ENCODE measurements at regions of chr18 and their contacts with region 1.

Region 1: DNA sequence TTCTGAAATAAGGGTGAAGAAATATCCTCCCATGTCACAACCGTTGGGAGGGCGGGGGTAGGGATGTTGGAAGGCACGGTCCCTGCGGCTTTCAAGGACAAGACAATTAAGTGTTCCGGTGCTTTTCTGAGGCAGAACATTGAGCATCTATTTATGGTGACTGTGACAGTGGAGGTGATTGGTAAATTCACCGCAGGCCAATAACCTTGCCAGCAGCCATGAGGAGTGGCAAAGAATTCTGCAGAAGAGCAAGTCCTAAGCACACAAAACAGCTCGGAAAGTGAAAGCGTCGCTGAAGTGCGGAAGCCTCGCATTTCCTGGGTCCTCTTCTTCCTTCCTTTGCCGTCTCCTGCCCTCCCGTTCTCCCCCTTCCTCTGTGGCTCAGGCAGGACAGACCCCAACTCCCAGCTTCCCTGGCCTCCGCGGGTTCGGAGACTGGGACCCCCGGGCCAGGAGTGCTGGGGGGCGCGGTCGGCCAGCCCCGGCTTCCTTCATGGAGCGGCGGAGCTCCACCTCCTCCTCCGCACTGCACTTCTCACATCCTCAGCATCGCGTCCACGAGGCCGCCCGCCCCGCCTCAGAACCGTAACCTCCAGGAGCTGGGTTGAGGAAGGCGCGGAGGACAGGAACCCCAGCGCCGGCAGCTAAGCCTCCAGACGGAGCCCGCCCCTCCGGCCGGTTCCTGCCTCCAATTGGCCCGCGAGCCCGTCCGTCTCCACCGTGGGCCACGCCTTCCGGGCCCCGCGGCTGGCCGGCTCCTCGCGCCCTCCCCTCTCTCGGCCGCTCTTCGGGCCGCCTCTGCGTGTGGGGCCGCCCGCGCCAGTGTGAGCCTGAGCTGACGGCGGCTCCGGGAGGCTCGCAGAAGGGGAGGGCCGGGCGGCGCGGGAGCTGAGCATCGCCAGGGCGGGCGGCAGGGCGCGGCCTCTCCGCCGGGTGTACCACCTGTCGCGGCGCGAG is at the start of gene ME2:
- DNase-seq: peak; percentile 86 to 94 (median 87)
- H3K4me3 ChIP-seq: peak within 1 kb of the TSS; percentile 76 to 94
- H3K4me3 Mint-ChIP-seq: peak within 1 kb of the TSS; percentile 97 to 99 (median 99)
- H3K27ac ChIP-seq: peak within 1 kb of the TSS; percentile 88
- H3K27ac Mint-ChIP-seq: peak within 1 kb of the TSS; percentile 96 to 99 (median 99)
- H3K4me1 ChIP-seq: peaks cover 44% of the 10 kb centered on the region
- H3K4me1 Mint-ChIP-seq: peaks cover 19 to 32% (median 26%) of the 10 kb centered on the region in 4 donors
- H3K27me3 ChIP-seq: no peaks in the 10 kb centered on the region
- H3K27me3 Mint-ChIP-seq: no peaks in the 10 kb centered on the region
- total RNA-seq, gene ME2: 48.6 to 53.5 TPM

Region 2: GRCh38 chr18:50281295-50281971 is 597.2 kb before region 1 on chr18 and contains the start of gene MBD1:
- CTCF ChIA-PET with region 1: no interaction called
- POLR2A ChIA-PET with region 1: no interaction called
- intact Hi-C with region 1: loop called (anchors 2 kb)
- DNase-seq: peak; percentile 97 to 99 (median 98)
- H3K4me3 ChIP-seq: peak within 1 kb of the TSS; percentile 45 to 97
- H3K4me3 Mint-ChIP-seq: peak within 1 kb of the TSS; percentile 96 to 99 (median 98)
- H3K27ac ChIP-seq: peak within 1 kb of the TSS; percentile 95
- H3K27ac Mint-ChIP-seq: peak within 1 kb of the TSS; percentile 88 to 99 (median 98)
- H3K4me1 ChIP-seq: peaks cover 36% of the 10 kb centered on the region
- H3K4me1 Mint-ChIP-seq: peaks cover 31 to 59% (median 47%) of the 10 kb centered on the region in 4 donors
- H3K27me3 ChIP-seq: no peaks in the 10 kb centered on the region
- H3K27me3 Mint-ChIP-seq: no peaks in the 10 kb centered on the region
- total RNA-seq, gene MBD1: 135 to 144 TPM

Region 3: DNA sequence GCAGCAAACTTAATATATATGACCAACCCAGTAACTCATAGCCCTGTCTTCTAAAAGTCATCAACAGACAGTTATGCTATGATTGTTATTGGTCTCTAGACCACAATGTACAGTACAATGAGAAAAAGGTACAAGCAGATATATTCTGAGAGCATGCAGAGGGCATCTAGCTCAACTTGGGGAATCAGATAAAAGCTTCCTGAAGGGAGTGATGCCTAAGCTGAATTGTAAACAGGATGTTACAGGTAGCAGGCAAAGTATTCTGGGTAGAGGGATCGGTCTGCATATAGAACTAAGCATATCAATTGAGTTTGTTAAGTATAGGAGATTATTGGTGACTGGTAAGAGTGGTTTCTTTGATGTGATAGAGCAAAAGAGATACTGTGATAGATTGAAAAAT is 30.6 kb after region 1 on chr18:
- CTCF ChIA-PET with region 1: interaction called, 3 read pairs
- POLR2A ChIA-PET with region 1: interaction called, 11 read pairs
- intact Hi-C with region 1: loop called (anchors 5 kb)
- DNase-seq: peak in 3 of 5 donors; percentile 1 to 25 (median 13)
- H3K4me3 ChIP-seq: no peak overlapping the region
- H3K4me3 Mint-ChIP-seq: peak overlapping the region in 3 of 8 donors; percentile 15 to 75 (median 43)
- H3K27ac ChIP-seq: no peak overlapping the region
- H3K27ac Mint-ChIP-seq: peak overlapping the region in 6 of 7 donors; percentile 52 to 98 (median 72)
- H3K4me1 ChIP-seq: peaks cover 8% of the 10 kb centered on the region
- H3K4me1 Mint-ChIP-seq: peaks cover 15 to 30% (median 23%) of the 10 kb centered on the region in 4 donors
- H3K27me3 ChIP-seq: no peaks in the 10 kb centered on the region
- H3K27me3 Mint-ChIP-seq: no peaks in the 10 kb centered on the region

Region 4: GRCh38 chr18:50967714-50968661 is 89.4 kb after region 1 on chr18 and contains the start of gene ELAC1:
- CTCF ChIA-PET with region 1: no interaction called
- POLR2A ChIA-PET with region 1: interaction called, 74 read pairs
- intact Hi-C with region 1: loop called (anchors 1 kb)
- DNase-seq: peak; percentile 67 to 76 (median 68)
- H3K4me3 ChIP-seq: peak within 1 kb of the TSS; percentile 77 to 88
- H3K4me3 Mint-ChIP-seq: peak within 1 kb of the TSS; percentile 95 to 99 (median 96)
- H3K27ac ChIP-seq: peak within 1 kb of the TSS; percentile 81
- H3K27ac Mint-ChIP-seq: peak within 1 kb of the TSS; percentile 90 to 98 (median 96)
- H3K4me1 ChIP-seq: peaks cover 25% of the 10 kb centered on the region
- H3K4me1 Mint-ChIP-seq: peaks cover 18 to 29% (median 21%) of the 10 kb centered on the region in 4 donors
- H3K27me3 ChIP-seq: no peaks in the 10 kb centered on the region
- H3K27me3 Mint-ChIP-seq: peaks cover 0 to 3% of the 10 kb centered on the region in 2 donors
- total RNA-seq, gene ELAC1: 11.6 to 11.7 TPM

Region 5: DNA sequence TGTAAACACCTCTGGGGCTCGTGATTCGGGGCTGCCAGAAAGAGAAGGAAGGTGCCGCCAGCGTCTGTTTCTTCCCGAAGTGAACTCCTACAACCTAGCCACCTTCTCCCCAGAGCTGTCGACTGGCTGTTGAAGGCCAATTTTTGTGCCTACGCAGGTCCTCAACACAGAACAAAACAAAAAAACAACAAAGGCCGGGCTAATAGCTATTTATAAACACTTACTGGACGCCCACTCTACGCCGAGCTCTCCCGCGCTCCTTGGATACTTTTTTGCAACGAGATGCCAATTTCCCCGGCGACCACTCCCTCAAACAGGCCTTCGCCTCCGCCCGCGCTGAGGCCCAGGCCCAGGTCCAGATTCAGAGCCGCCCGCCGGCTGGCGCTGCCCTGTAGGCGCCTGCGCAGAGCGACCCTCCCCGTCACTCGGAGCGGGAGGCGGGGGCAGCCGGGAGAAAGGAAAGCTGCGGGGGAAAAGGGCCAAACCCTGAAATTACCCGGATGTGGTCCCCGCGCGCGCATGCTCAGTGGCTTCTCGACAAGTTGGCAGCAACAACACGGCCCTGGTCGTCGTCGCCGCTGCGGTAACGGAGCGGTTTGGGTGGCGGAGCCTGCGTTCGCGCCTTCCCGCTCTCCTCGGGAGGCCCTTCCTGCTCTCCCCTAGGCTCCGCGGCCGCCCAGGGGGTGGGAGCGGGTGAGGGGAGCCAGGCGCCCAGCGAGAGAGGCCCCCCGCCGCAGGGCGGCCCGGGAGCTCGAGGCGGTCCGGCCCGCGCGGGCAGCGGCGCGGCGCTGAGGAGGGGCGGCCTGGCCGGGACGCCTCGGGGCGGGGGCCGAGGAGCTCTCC is 151.3 kb after region 1 on chr18 and contains the start of gene SMAD4:
- CTCF ChIA-PET with region 1: interaction called, 5 read pairs
- POLR2A ChIA-PET with region 1: interaction called, 120 read pairs
- intact Hi-C with region 1: loop called (anchors 1 kb)
- DNase-seq: peak; percentile 96 to 98 (median 97)
- H3K4me3 ChIP-seq: peak within 1 kb of the TSS; percentile 47 to 53
- H3K4me3 Mint-ChIP-seq: peak within 1 kb of the TSS; percentile 95 to 100 (median 98)
- H3K27ac ChIP-seq: peak within 1 kb of the TSS; percentile 83
- H3K27ac Mint-ChIP-seq: peak within 1 kb of the TSS; percentile 98 to 99 (median 99)
- H3K4me1 ChIP-seq: peaks cover 80% of the 10 kb centered on the region
- H3K4me1 Mint-ChIP-seq: peaks cover 39 to 63% (median 48%) of the 10 kb centered on the region in 4 donors
- H3K27me3 ChIP-seq: no peaks in the 10 kb centered on the region
- H3K27me3 Mint-ChIP-seq: no peaks in the 10 kb centered on the region
- total RNA-seq, gene SMAD4: 143 to 155 TPM

Region 6: DNA sequence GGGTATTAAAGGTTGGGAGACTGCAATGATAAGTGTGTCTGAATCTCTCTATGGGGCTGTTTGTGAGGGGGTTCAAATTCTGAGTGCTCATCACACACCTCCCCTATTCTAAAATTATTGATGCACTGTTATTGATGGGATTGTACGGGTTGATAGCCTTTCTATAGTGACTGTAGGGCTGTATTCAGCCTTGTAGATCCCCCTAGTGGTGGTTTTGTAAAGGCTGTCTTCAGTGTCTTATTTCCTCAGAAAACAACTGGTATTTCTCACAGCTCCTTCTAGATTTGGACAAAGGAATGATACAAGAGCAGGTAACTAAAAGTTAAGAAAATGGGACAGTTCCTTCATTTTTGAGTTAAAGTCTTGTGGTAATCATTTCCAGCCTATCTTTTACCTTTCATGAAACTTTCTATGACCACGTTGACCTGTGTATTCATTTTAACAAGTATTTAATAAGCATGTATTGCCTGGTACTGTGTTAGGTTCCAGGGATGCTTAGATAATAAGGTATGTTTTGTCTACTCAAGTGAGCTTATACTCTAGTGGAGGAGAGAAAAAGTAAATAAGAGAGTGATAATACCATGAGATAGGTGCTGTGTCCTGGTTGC is 172.6 kb after region 1 on chr18:
- CTCF ChIA-PET with region 1: interaction called, 7 read pairs
- POLR2A ChIA-PET with region 1: interaction called, 3 read pairs
- intact Hi-C with region 1: loop called (anchors 1 kb)
- DNase-seq: peak; percentile 54 to 66 (median 59)
- H3K4me3 ChIP-seq: no peak overlapping the region
- H3K4me3 Mint-ChIP-seq: peak overlapping the region in 1 of 8 donors; percentile 36
- H3K27ac ChIP-seq: no peak overlapping the region
- H3K27ac Mint-ChIP-seq: peak overlapping the region in 6 of 7 donors; percentile 2 to 71 (median 52)
- H3K4me1 ChIP-seq: peaks cover 16% of the 10 kb centered on the region
- H3K4me1 Mint-ChIP-seq: peaks cover 21 to 36% (median 31%) of the 10 kb centered on the region in 4 donors
- H3K27me3 ChIP-seq: no peaks in the 10 kb centered on the region
- H3K27me3 Mint-ChIP-seq: no peaks in the 10 kb centered on the region

Region 7: DNA sequence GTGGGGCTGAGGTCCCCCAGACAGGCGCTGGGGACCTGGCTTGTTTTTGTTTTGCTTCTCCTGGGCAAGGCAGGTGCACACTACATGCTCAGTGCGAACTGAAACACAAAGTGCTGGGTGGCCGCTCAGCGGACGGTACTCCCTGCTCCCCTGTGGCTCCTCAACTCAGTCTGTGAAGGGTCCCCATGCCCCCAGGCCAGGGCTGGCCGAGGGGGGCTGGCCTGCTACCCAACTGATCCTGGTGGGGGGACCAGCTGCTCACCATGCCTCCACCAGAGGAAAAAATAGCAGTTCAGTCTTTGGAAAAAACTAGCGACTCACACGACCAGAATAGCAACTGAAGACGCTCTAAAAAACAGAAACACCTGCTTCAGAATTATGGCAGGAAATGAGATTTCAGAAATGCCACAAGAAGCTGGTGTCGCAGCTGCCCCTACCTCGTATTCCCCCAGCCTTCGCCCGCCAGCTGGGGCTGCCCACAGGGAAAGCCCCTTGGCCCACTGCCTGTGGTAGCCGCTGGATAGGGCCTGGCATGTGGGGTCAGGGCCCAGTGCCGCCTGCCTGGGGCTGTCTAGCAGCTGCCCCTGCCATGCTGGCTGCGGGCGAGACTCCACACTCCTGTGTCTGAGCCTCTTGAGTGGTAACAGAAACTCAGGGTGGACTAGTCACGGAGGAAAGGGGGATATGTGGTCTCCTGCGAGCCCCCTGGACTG is 275.2 kb after region 1 on chr18:
- CTCF ChIA-PET with region 1: no interaction called
- POLR2A ChIA-PET with region 1: interaction called, 17 read pairs
- intact Hi-C with region 1: loop called (anchors 2 kb)
- DNase-seq: peak; percentile 26 to 69 (median 46)
- H3K4me3 ChIP-seq: peak overlapping the region; percentile 47 to 53
- H3K4me3 Mint-ChIP-seq: peak overlapping the region; percentile 81 to 90 (median 85)
- H3K27ac ChIP-seq: peak overlapping the region; percentile 50
- H3K27ac Mint-ChIP-seq: peak overlapping the region; percentile 78 to 92 (median 87)
- H3K4me1 ChIP-seq: peaks cover 36% of the 10 kb centered on the region
- H3K4me1 Mint-ChIP-seq: peaks cover 20 to 41% (median 29%) of the 10 kb centered on the region in 4 donors
- H3K27me3 ChIP-seq: no peaks in the 10 kb centered on the region
- H3K27me3 Mint-ChIP-seq: no peaks in the 10 kb centered on the region